ENCODE measurements at regions of chr17 and their contacts with region 1.

Region 1: GRCh38 chr17:59331129-59331928 is at the start of gene YPEL2:
- DNase-seq: peak; percentile 97
- ATAC-seq: peak; percentile 94 to 95
- total RNA-seq, gene YPEL2: 10.5 to 25.4 TPM

Region 2: DNA sequence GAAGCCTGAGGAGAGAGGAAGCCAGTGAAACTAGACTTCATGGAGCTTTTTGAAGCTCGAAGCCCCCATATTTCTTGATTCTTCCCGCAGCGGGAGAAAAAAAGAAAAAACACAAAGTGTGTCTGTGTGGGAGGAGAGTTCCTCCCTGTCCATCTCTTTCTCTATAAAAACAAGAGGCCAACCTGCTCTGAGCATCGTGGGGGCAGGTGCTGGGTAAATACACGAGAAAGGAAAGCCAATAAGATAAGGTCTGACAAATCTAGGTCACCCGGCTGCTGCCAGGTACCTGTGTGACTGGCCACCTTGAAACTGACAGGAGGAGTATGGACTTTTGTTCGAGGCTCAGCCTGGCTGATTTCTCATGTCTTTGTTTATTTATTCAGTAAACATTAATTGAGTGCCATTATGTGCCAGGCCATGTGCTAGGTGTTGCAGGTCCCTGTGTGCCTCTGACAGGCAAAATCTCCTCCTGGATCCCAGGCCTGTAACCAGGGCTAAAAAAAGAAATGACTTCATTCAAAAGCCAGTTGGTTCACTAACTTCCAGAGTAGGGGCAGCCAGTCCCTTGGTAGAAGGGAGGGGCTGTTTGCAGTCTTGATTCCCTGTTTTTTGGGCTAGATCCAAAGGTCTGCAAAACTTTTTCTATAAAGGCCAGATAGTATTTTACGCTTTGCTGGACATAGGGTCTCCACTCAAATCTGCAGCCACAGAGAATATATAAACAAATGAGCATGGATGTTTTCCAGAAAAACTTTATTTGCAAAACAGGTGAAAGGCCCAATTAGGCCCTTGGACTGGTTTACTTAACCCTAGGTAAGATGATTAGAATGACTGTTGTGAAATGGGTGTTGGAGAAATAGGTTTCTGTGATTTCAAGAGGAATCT is 35.7 kb after region 1 on chr17:
- intact Hi-C with region 1: loop called in 1 of 2 experiments (anchors 5 kb)
- DNase-seq: no peak
- ATAC-seq: peak; percentile 65 to 77

Region 3: GRCh38 chr17:59381716-59382570 is 50.6 kb after region 1 on chr17:
- intact Hi-C with region 1: loop called in 1 of 2 experiments (anchors 10 kb)
- DNase-seq: peak; percentile 55
- ATAC-seq: peak; percentile 90 to 91

Region 4: GRCh38 chr17:59440784-59441441 is 109.6 kb after region 1 on chr17:
- intact Hi-C with region 1: loop called (anchors 1 to 5 kb)
- DNase-seq: peak; percentile 94
- ATAC-seq: peak; percentile 91 to 93

Measured in left cardiac atrium (tissue), 4 donors.